G401 (cell line): ENCODE measurements at regions of chr9 and their contacts with region 1.

Region 1: DNA sequence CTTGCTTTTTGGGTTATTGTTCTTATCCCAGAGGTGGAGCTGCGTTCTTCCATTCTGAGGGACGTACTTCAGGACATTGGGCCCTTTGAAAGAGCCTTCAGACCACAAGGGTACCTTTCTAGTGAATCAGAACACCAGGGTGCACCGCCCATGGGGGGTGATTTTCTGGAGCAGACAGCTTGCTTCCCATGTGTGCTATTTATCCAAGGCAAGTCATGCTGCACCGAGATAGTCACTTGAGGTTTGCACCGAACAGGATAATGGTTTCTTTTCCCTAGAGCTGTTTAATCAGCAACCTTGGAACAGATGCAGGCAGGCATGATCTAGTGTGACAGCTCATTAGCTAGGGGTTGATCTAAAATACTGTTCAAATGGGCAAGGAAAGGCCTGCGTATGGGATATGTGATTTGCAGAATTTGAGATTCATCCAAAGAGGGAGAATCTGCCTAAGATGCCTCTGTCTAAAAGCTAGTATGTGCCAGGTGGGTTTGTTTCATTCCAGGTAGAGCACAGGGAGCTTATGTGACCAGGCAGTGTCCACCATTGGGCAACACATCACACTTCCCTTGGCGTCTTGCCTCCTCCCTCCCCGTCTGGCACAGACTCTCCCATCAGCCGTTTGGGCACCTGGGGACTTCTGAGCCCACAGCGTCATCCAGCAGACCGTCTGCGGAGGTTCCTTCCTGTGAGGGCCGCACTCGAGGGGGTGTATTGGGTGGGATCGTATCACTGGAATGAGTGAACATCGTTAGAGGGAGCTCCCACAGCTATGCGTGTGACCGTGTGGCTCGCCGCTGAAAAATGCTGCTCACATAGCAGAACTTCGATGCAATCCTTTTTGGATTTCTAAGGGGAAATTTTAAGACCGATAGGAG is 23.0 kb downstream of the ABL1 start:
- DNase-seq: peak; percentile 78

Region 2: GRCh38 chr9:130732131-130732530 is 126.0 kb before region 1 on chr9:
- in situ Hi-C with region 1: loop called (anchors 10 kb)
- DNase-seq: no peak